Caco-2 (cell line): ENCODE measurements at regions of chr13 and their contacts with region 1.

Region 1: GRCh38 chr13:41263261-41264027 is at the start of gene MTRF1:
- DNase-seq: peak; percentile 78 to 79
- H3K4me3 ChIP-seq: peak within 1 kb of the TSS; percentile 92
- H3K4me3 Mint-ChIP-seq: peak within 1 kb of the TSS; percentile 92
- H3K27ac Mint-ChIP-seq: peak within 1 kb of the TSS; percentile 91
- H3K4me1 ChIP-seq: no peaks in the 10 kb centered on the region
- H3K4me1 Mint-ChIP-seq: no peaks in the 10 kb centered on the region
- H3K27me3 ChIP-seq: no peaks in the 10 kb centered on the region
- H3K27me3 Mint-ChIP-seq: no peaks in the 10 kb centered on the region
- CTCF ChIP-seq: no peak
- total RNA-seq, gene MTRF1: 21.2 and 24.7 TPM in 2 replicates

Region 2: DNA sequence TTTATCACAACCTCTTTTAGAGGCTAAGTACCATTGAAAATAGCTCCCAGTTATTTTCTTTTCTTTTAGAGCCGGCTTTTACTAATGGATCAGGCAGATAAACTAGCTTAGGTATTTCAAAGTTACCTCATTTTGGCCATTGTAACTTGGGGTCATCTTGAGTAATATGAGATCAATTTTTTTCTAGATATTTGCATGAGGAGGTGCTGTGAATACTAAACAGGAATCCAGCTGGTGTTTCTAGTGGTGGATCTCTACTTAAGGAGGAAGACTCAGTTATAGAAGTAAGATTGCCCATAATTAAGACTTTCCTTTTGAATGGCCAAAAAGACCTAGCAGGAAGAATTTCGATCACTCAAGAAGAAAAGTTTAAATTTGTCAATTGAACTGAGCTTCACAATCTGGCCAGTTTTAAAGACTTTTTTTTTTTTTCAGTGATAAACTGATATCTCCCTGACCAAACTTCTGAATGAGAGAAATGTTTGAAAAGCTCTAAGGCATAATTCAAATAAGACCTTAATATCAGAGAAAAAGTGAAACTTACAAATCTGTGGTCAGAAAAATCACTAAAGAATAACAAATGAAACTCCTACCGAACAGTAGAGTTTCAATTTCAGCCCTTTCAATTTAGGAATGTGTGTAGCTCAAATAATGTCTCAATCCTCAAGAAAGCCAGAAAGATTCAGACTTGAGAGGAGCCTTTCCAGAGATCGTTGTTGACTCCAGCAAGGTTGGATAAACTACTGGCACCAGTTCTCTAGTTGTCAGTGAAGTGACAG is 36.1 kb after region 1 on chr13:
- CTCF ChIA-PET with region 1: no interaction called
- POLR2A ChIA-PET with region 1: no interaction called
- intact Hi-C with region 1: no loop called
- DNase-seq: no peak
- H3K4me3 ChIP-seq: no peak overlapping the region
- H3K4me3 Mint-ChIP-seq: no peak overlapping the region
- H3K27ac Mint-ChIP-seq: no peak overlapping the region
- H3K4me1 ChIP-seq: no peaks in the 10 kb centered on the region
- H3K4me1 Mint-ChIP-seq: no peaks in the 10 kb centered on the region
- H3K27me3 ChIP-seq: no peaks in the 10 kb centered on the region
- H3K27me3 Mint-ChIP-seq: peaks cover 4% of the 10 kb centered on the region
- CTCF ChIP-seq: no peak

Region 3: DNA sequence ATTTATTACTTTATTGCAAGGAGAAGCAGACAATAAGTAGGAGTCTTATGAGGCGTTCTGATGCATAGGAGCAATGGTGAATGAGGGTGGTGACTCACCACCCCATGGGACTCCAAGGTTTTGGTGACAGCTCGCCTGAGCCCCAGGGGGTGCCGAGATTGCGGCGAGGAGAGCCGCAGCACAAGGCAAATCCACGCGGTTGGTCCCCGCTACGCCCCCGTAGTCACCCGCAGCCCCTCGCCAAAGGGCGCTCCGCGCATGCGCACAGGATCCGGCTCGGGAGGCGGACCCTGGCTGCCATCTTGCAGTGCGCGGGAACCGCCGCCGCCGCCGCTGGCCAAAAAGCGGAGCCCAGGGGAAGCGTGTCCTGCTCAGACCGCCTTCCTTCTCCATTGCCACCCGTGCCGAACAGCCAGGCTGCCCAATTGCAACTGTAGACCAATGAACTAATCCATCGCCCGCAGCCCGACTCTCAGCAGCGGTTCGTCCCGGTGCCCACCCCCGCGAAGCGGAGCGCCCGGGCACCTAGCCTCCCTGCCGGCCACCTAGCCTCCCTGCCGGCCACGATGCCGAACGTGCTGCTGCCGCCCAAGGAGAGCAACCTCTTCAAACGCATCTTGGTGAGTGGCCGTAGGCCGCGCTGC is 47.6 kb after region 1 on chr13 and contains the start of gene NAA16:
- CTCF ChIA-PET with region 1: no interaction called
- POLR2A ChIA-PET with region 1: no interaction called
- intact Hi-C with region 1: loop called (anchors 2 kb)
- DNase-seq: peak; percentile 90 to 94
- H3K4me3 ChIP-seq: peak within 1 kb of the TSS; percentile 85
- H3K4me3 Mint-ChIP-seq: peak within 1 kb of the TSS; percentile 97
- H3K27ac Mint-ChIP-seq: peak within 1 kb of the TSS; percentile 85
- H3K4me1 ChIP-seq: peaks cover 6% of the 10 kb centered on the region; the same call in 1 of the 2 replicates
- H3K4me1 Mint-ChIP-seq: peaks cover 15% of the 10 kb centered on the region
- H3K27me3 ChIP-seq: no peaks in the 10 kb centered on the region
- H3K27me3 Mint-ChIP-seq: no peaks in the 10 kb centered on the region
- CTCF ChIP-seq: no peak
- total RNA-seq, gene NAA16: 32.4 and 37.3 TPM in 2 replicates